GM12878 (cell line): ENCODE measurements at regions of chr16 and their contacts with region 1.

Region 1: GRCh38 chr16:9008601-9009260 is 45.0 kb upstream of the USP7 start:
- DNase-seq: peak; percentile 21
- ATAC-seq: peak; percentile 100
- H3K4me3 ChIP-seq: no peak overlapping the region; the same call in 1 of the 2 replicates
- H3K27ac ChIP-seq: no peak overlapping the region
- H3K4me1 ChIP-seq: peaks cover 6% of the 10 kb centered on the region
- H3K27me3 ChIP-seq: no peaks in the 10 kb centered on the region
- CTCF ChIP-seq: peak; percentile 83 to 97 (median 89)
- EP300 ChIP-seq: no peak
- POLR2A ChIP-seq: no peak
- RAD21 ChIP-seq: peak; percentile 89

Region 2: GRCh38 chr16:8878521-8878911 is 130.2 kb before region 1 on chr16:
- CTCF ChIA-PET with region 1: interaction called, 16 read pairs
- POLR2A ChIA-PET with region 1: no interaction called
- RAD21 ChIA-PET with region 1: interaction called, 15 read pairs
- SMC1A ChIA-PET with region 1: no interaction called
- in situ Hi-C with region 1: no loop called
- intact Hi-C with region 1: no loop called
- DNase-seq: no peak
- ATAC-seq: no peak
- H3K4me3 ChIP-seq: no peak overlapping the region
- H3K27ac ChIP-seq: no peak overlapping the region
- H3K4me1 ChIP-seq: peaks cover 6% of the 10 kb centered on the region
- H3K27me3 ChIP-seq: no peaks in the 10 kb centered on the region
- CTCF ChIP-seq: no peak
- EP300 ChIP-seq: no peak
- POLR2A ChIP-seq: no peak
- RAD21 ChIP-seq: no peak

Region 3: GRCh38 chr16:8892101-8892575 is 116.6 kb before region 1 on chr16:
- CTCF ChIA-PET with region 1: interaction called, 43 read pairs
- POLR2A ChIA-PET with region 1: interaction called, 3 read pairs
- RAD21 ChIA-PET with region 1: interaction called, 30 read pairs
- SMC1A ChIA-PET with region 1: interaction called, 20 read pairs
- in situ Hi-C with region 1: no loop called
- intact Hi-C with region 1: loop called (anchors 1 kb)
- DNase-seq: peak; percentile 42
- ATAC-seq: peak; percentile 59
- H3K4me3 ChIP-seq: peak overlapping the region; percentile 59
- H3K27ac ChIP-seq: peak overlapping the region; percentile 95
- H3K4me1 ChIP-seq: peaks cover 49% of the 10 kb centered on the region
- H3K27me3 ChIP-seq: no peaks in the 10 kb centered on the region
- CTCF ChIP-seq: no peak
- EP300 ChIP-seq: no peak
- POLR2A ChIP-seq: no peak; the same call in 1 of the 2 replicates
- RAD21 ChIP-seq: no peak

Region 4: GRCh38 chr16:8905168-8905762 is 103.5 kb before region 1 on chr16:
- CTCF ChIA-PET with region 1: interaction called, 20 read pairs
- POLR2A ChIA-PET with region 1: no interaction called
- RAD21 ChIA-PET with region 1: interaction called, 12 read pairs
- SMC1A ChIA-PET with region 1: interaction called, 28 read pairs
- in situ Hi-C with region 1: no loop called
- intact Hi-C with region 1: loop called (anchors 1 kb)
- DNase-seq: no peak
- ATAC-seq: peak; percentile 84
- H3K4me3 ChIP-seq: no peak overlapping the region
- H3K27ac ChIP-seq: no peak overlapping the region
- H3K4me1 ChIP-seq: no peaks in the 10 kb centered on the region
- H3K27me3 ChIP-seq: no peaks in the 10 kb centered on the region
- CTCF ChIP-seq: peak; percentile 58 to 67 (median 65); a peak in 5 of 6 replicates
- EP300 ChIP-seq: no peak
- POLR2A ChIP-seq: no peak
- RAD21 ChIP-seq: peak; percentile 72

Region 5: DNA sequence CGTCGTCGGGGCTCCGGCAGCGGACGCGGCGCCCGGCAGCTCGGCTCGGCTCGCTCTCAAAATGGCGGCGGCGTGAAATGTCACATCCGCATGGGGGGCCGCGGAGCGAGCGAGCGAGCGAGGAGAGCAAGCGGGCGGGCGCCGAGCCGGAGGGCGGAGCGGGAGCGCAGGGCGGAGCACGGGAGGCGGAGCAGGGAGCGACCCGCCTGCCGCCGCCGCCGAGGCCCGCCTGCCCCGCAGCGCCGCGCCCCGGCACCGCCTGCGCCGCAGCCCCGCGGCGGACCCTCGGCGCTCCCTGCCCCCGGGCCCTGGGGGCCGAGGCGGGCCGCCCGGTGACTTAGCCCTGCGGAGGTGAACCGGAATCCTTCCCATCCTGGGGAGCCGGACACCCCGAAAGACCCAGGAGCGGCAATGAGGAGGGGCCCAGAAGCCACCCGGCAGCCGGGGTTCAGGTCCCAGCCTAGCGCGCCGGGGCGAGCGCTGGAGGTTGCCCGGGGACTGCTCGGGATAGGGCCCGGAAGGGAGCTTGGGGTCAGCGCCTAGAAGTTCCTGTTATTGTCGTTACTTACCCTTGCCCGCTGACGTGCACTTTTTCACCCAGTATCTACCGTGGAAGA is 44.8 kb before region 1 on chr16 and contains the start of gene USP7:
- CTCF ChIA-PET with region 1: interaction called, 12 read pairs
- POLR2A ChIA-PET with region 1: interaction called, 5 read pairs
- RAD21 ChIA-PET with region 1: interaction called, 3 read pairs
- SMC1A ChIA-PET with region 1: interaction called, 4 read pairs
- in situ Hi-C with region 1: no loop called
- intact Hi-C with region 1: loop called (anchors 2 kb)
- DNase-seq: no peak
- ATAC-seq: peak; percentile 86
- H3K4me3 ChIP-seq: peak within 1 kb of the TSS; percentile 80
- H3K27ac ChIP-seq: peak within 1 kb of the TSS; percentile 85
- H3K4me1 ChIP-seq: peaks cover 8% of the 10 kb centered on the region
- H3K27me3 ChIP-seq: no peaks in the 10 kb centered on the region
- CTCF ChIP-seq: peak in 1 of 3 experiments; percentile 13; a peak in 1 of 6 replicates
- EP300 ChIP-seq: no peak
- POLR2A ChIP-seq: peak; percentile 89
- RAD21 ChIP-seq: no peak
- polyA plus RNA-seq, gene USP7: 20.8 to 25.0 TPM

Region 6: GRCh38 chr16:9047686-9048301 is 39.1 kb after region 1 on chr16:
- CTCF ChIA-PET with region 1: interaction called, 13 read pairs
- POLR2A ChIA-PET with region 1: interaction called, 3 read pairs
- RAD21 ChIA-PET with region 1: interaction called, 10 read pairs
- SMC1A ChIA-PET with region 1: interaction called, 4 read pairs
- in situ Hi-C with region 1: no loop called
- intact Hi-C with region 1: no loop called
- DNase-seq: peak; percentile 62
- ATAC-seq: peak; percentile 76
- H3K4me3 ChIP-seq: no peak overlapping the region
- H3K27ac ChIP-seq: peak overlapping the region; percentile 22; the same call in 1 of the 2 replicates
- H3K4me1 ChIP-seq: peaks cover 23% of the 10 kb centered on the region
- H3K27me3 ChIP-seq: no peaks in the 10 kb centered on the region
- CTCF ChIP-seq: no peak
- EP300 ChIP-seq: no peak; a peak in 1 of 4 replicates
- POLR2A ChIP-seq: no peak
- RAD21 ChIP-seq: no peak